ENCODE measurements at regions of chr4 and their contacts with region 1.

Region 1: GRCh38 chr4:165378745-165379677 is at the start of gene CPE:
- DNase-seq: peak; percentile 80
- ATAC-seq: peak; percentile 98
- H3K4me3 ChIP-seq: peak within 1 kb of the TSS; percentile 72
- H3K27ac ChIP-seq: no peak within 1 kb of the TSS
- H3K4me1 ChIP-seq: peaks cover 6% of the 10 kb centered on the region; the same call in 1 of the 2 replicates
- H3K27me3 ChIP-seq: no peaks in the 10 kb centered on the region
- CTCF ChIP-seq: peak; percentile 45
- total RNA-seq, gene CPE: 15.4 and 15.5 TPM in 2 replicates

Region 2: GRCh38 chr4:165433529-165433928 is 54.5 kb after region 1 on chr4:
- CTCF ChIA-PET with region 1: no interaction called
- POLR2A ChIA-PET with region 1: interaction called, 6 read pairs
- intact Hi-C with region 1: loop called (anchors 5 kb)
- DNase-seq: peak; percentile 82
- ATAC-seq: peak; percentile 100
- H3K4me3 ChIP-seq: no peak overlapping the region
- H3K27ac ChIP-seq: peak overlapping the region; percentile 62
- H3K4me1 ChIP-seq: peaks cover 13% of the 10 kb centered on the region
- H3K27me3 ChIP-seq: no peaks in the 10 kb centered on the region
- CTCF ChIP-seq: no peak

Region 3: DNA sequence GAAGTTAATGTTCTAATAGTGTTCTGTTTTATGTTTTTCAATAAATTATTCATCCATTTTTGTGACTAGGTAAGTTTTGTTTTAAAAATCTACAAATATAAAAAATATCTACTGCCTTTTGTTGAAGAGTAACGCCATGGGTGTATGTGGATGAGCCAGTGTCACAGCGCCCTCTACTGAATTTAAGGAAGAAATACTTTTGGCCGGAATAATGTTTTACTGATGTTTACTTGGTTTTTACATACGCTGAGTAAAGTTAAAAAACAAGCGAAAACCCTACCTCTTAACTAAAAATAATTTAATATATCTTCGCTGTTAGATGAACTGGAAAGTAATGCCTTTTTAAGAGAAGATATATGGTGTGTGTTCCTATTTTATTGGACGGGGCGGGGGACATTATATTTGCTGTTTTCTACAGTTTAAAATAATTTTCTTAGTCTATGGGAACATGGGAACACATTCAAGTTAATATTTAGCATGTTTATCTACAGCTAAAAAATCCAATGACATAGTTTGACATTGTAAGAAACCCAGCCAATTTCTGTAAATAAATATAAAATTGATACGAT is 85.9 kb after region 1 on chr4:
- CTCF ChIA-PET with region 1: no interaction called
- POLR2A ChIA-PET with region 1: no interaction called
- intact Hi-C with region 1: loop called (anchors 1 kb)
- DNase-seq: peak; percentile 51
- ATAC-seq: peak; percentile 54
- H3K4me3 ChIP-seq: peak overlapping the region; percentile 53; the same call in 1 of the 2 replicates
- H3K27ac ChIP-seq: no peak overlapping the region
- H3K4me1 ChIP-seq: no peaks in the 10 kb centered on the region
- H3K27me3 ChIP-seq: no peaks in the 10 kb centered on the region
- CTCF ChIP-seq: peak; percentile 75

Region 4: DNA sequence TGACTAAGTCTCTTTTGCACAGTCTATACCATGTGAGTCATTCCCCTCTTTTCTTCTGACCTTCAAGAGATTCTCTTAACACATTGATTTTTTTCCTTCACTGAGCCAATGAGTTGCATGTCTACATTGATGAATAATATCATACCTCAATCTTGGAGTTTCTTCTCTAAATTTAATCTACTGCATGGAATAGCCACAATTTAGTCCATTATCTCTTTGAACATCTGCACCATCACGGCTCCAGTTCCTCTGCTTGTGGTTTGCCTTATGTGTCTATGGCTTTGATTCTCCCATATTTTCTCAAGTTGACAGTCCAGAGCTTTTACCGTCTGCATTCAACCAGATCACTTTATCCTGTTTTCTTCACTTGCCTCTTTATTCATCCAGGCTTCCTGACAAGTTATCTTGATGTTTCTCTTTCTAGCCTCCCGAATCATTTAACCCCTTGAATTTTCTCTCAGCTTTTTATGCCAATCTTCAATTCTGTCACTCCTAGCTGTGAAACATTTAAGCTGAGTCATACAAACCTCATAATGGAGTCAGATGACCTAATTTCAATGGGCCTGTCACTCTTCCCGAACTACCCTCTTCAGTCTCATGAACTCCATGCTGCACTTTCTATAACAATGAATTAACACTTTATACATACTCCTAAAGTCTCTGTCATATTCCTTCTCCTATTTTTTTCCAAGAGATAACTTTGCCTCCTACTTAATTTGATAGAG is 222.1 kb after region 1 on chr4:
- CTCF ChIA-PET with region 1: no interaction called
- POLR2A ChIA-PET with region 1: no interaction called
- intact Hi-C with region 1: no loop called
- DNase-seq: no peak
- ATAC-seq: no peak
- H3K4me3 ChIP-seq: no peak overlapping the region
- H3K27ac ChIP-seq: no peak overlapping the region
- H3K4me1 ChIP-seq: peaks cover 6% of the 10 kb centered on the region; the same call in 1 of the 2 replicates
- H3K27me3 ChIP-seq: no peaks in the 10 kb centered on the region
- CTCF ChIP-seq: no peak

Measured in PC-3 (cell line).